Activated CD4-positive, alpha-beta memory T cell treated with anti-CD3 and anti-CD28 coated beads for 36 hours (primary cell): ENCODE measurements at regions of chr2 and their contacts with region 1.

Region 1: GRCh38 chr2:96868555-96869280 is 1.2 kb downstream of the SEMA4C start:
- DNase-seq: peak; percentile 81
- H3K4me3 Mint-ChIP-seq: peak overlapping the region; percentile 79
- H3K27ac Mint-ChIP-seq: peak overlapping the region; percentile 76
- H3K4me1 Mint-ChIP-seq: peaks cover 35% of the 10 kb centered on the region
- H3K27me3 Mint-ChIP-seq: peaks cover 2% of the 10 kb centered on the region

Region 2: DNA sequence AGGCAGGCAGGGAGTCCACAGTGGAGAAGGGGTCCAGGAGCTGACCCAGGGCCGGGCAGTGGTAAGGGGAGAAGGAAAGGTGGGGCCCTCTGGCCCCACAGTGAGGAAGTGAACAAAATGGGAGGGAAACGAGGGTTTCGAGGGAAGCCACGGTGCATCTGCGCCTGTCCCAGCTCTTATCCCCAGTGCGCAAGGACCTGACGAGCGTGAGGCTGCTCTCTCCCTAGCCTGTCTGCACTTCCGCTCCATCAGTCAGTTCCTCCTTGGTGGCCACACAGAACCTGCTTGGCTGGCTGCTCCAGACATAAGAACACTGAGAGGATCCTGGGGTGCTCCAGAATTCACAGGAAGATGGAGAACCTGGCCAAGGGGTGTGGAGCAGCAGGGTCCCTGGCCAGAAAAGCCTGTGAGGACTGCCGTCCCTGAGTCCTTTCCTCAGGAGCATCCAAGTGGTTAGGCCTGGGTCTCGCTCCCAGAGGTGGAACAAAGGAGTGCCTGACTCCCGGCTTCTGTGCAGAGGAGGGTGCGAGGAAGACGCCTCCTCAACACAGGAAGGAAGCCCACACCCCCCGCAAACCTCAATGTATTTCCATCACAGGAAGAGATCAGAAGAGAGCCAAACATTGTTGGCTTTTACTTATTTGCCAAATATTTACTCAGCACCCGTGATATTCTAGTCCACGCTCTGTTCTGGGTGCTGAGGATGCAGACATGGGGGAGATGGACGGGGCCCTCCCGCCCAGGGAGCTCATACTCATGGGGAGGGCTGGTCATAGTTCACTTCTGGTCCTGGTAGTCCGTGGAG is 44.9 kb after region 1 on chr2:
- CTCF ChIA-PET with region 1: no interaction called
- POLR2A ChIA-PET with region 1: no interaction called
- intact Hi-C with region 1: loop called (anchors 5 kb)
- DNase-seq: peak; percentile 72
- H3K4me3 Mint-ChIP-seq: peak overlapping the region; percentile 56
- H3K27ac Mint-ChIP-seq: peak overlapping the region; percentile 73
- H3K4me1 Mint-ChIP-seq: peaks cover 51% of the 10 kb centered on the region
- H3K27me3 Mint-ChIP-seq: no peaks in the 10 kb centered on the region